Colonic mucosa (tissue), 4 donors: ENCODE measurements at regions of chr7 and their contacts with region 1.

Region 1: DNA sequence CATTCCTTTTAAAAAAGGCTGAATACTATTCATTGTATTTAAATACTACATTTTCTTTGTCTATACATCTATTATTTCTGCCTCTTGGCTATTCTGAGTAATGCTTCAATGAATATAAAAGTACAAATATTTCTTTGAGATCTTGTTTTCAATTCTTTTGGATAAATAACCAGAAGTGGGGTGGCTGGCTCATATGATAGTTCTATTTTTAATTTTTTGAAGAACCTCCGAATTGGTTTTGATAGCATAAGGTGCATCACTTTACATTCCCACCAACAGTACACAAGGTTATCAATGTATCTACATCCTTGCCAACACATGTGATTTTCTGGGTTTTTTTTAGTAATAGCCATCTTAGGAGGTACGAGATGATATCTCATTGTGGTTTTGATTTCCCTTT is 72.5 kb downstream of the ZNF277 start:
- DNase-seq: no peak
- H3K4me3 ChIP-seq: no peak overlapping the region
- H3K27ac ChIP-seq: no peak overlapping the region
- H3K4me1 ChIP-seq: no peaks in the 10 kb centered on the region
- H3K27me3 ChIP-seq: no peaks in the 10 kb centered on the region
- CTCF ChIP-seq: no peak

Region 2: GRCh38 chr7:112103246-112103645 is 175.8 kb before region 1 on chr7:
- intact Hi-C with region 1: loop called (anchors 5 kb)
- DNase-seq: peak; percentile 29
- H3K4me3 ChIP-seq: no peak overlapping the region
- H3K27ac ChIP-seq: peak overlapping the region; percentile 33
- H3K4me1 ChIP-seq: peaks cover 4% of the 10 kb centered on the region
- H3K27me3 ChIP-seq: no peaks in the 10 kb centered on the region
- CTCF ChIP-seq: no peak